ENCODE measurements at regions of chr1 and their contacts with region 1.

Region 1: DNA sequence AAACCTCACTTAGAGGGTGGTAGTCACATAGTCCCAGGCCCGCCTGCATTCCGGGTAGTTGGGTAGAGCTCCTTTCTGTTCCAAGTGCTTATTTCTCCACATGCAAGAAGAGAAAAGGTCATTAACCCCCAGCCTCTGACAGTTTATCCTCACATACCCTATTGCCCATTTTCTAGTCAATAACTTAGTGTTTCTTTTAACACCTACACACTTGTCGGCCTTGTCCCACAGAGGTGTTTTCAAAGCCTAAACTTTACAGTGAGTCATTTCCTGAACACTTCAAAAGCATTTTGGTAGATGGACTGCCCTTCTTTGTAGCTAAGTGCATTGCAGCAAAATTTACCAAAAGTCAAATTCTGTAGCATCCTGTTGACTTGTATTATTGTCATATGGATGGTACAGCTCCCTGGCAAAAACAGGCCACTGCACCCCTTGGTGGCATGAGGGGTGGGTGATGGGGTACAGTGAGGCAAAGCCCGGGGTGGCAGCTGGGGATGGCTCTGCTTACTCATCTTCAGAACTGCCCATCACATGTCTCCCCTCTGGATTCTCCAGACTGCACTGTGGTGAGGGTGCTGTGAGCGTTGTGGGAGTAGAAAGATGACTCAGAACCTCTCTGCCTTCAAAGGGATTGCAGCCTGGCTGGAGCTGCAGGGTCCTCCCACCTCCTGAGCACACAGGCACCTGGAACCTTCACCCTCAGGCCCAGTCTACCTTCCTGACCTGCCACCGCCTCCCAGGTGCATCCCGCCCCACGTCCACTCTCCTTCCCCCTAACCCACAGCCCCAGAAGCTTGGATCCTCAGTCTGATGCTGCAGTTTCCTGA is 45.8 kb upstream of the DMRTB1 start:
- DNase-seq: peak; percentile 24 to 81 (median 48)
- H3K4me3 ChIP-seq: peak overlapping the region; percentile 5
- H3K4me3 Mint-ChIP-seq: peak overlapping the region; percentile 28 to 86 (median 78)
- H3K27ac ChIP-seq: peak overlapping the region; percentile 72
- H3K27ac Mint-ChIP-seq: peak overlapping the region; percentile 96 to 99 (median 99)
- H3K4me1 ChIP-seq: peaks cover 70% of the 10 kb centered on the region
- H3K4me1 Mint-ChIP-seq: peaks cover 66 to 89% (median 81%) of the 10 kb centered on the region in 3 donors
- H3K27me3 ChIP-seq: no peaks in the 10 kb centered on the region
- H3K27me3 Mint-ChIP-seq: no peaks in the 10 kb centered on the region

Region 2: GRCh38 chr1:53145942-53146708 is 267.3 kb before region 1 on chr1:
- CTCF ChIA-PET with region 1: no interaction called
- POLR2A ChIA-PET with region 1: no interaction called
- DNase-seq: no peak
- H3K4me3 ChIP-seq: no peak overlapping the region
- H3K4me3 Mint-ChIP-seq: no peak overlapping the region
- H3K27ac ChIP-seq: no peak overlapping the region
- H3K27ac Mint-ChIP-seq: peak overlapping the region in 1 of 8 donors; percentile 29
- H3K4me1 ChIP-seq: no peaks in the 10 kb centered on the region
- H3K4me1 Mint-ChIP-seq: no peaks in the 10 kb centered on the region
- H3K27me3 ChIP-seq: no peaks in the 10 kb centered on the region
- H3K27me3 Mint-ChIP-seq: peaks cover 0 to 3% of the 10 kb centered on the region in 2 donors

Region 3: GRCh38 chr1:53326088-53326597 is 87.2 kb before region 1 on chr1:
- CTCF ChIA-PET with region 1: interaction called, 11 read pairs
- POLR2A ChIA-PET with region 1: interaction called, 18 read pairs
- DNase-seq: peak; percentile 88 to 94 (median 91)
- H3K4me3 ChIP-seq: peak overlapping the region; percentile 87
- H3K4me3 Mint-ChIP-seq: peak overlapping the region; percentile 92 to 100 (median 95)
- H3K27ac ChIP-seq: peak overlapping the region; percentile 85
- H3K27ac Mint-ChIP-seq: peak overlapping the region; percentile 51 to 98 (median 90)
- H3K4me1 ChIP-seq: peaks cover 14% of the 10 kb centered on the region
- H3K4me1 Mint-ChIP-seq: peaks cover 18 to 31% (median 24%) of the 10 kb centered on the region in 3 donors
- H3K27me3 ChIP-seq: no peaks in the 10 kb centered on the region
- H3K27me3 Mint-ChIP-seq: no peaks in the 10 kb centered on the region

Region 4: DNA sequence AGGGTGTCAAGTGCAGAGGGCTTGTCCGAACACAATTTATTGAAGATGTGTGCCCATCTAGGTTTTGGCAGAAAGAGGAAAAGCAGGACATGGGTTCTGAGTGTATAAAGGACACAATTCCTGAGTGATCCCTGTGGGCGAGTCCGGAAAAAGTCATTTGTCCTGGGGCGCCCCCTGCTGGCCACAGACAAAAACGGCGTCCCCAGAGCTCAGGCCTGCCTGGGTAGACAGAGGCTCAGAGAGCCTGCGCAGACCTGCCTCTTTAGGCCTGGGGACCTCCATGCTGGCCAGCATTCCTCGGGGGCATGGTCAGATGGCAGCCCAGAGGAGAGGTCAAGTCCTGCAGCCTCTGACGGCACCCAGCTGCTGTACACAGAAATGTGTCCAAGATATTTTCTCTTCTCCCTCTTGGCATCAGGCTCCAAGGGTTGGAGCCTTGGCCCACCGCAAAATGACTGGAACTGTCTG is 20.0 kb before region 1 on chr1:
- CTCF ChIA-PET with region 1: interaction called, 20 read pairs
- POLR2A ChIA-PET with region 1: interaction called, 8 read pairs
- DNase-seq: peak; percentile 43 to 76 (median 61)
- H3K4me3 ChIP-seq: no peak overlapping the region
- H3K4me3 Mint-ChIP-seq: no peak overlapping the region
- H3K27ac ChIP-seq: no peak overlapping the region
- H3K27ac Mint-ChIP-seq: peak overlapping the region in 3 of 8 donors; percentile 23 to 74 (median 33)
- H3K4me1 ChIP-seq: no peaks in the 10 kb centered on the region
- H3K4me1 Mint-ChIP-seq: peaks cover 3 to 5% (median 5%) of the 10 kb centered on the region in 3 donors
- H3K27me3 ChIP-seq: no peaks in the 10 kb centered on the region
- H3K27me3 Mint-ChIP-seq: no peaks in the 10 kb centered on the region

Region 5: GRCh38 chr1:53442299-53442698 is 28.9 kb after region 1 on chr1:
- CTCF ChIA-PET with region 1: interaction called, 11 read pairs
- POLR2A ChIA-PET with region 1: no interaction called
- DNase-seq: no peak
- H3K4me3 ChIP-seq: no peak overlapping the region
- H3K4me3 Mint-ChIP-seq: no peak overlapping the region
- H3K27ac ChIP-seq: no peak overlapping the region
- H3K27ac Mint-ChIP-seq: peak overlapping the region in 2 of 8 donors; percentile 33 to 72
- H3K4me1 ChIP-seq: no peaks in the 10 kb centered on the region
- H3K4me1 Mint-ChIP-seq: no peaks in the 10 kb centered on the region
- H3K27me3 ChIP-seq: no peaks in the 10 kb centered on the region
- H3K27me3 Mint-ChIP-seq: peaks cover 0 to 4% of the 10 kb centered on the region in 2 donors